Activated CD4-positive, alpha-beta T cell treated with anti-CD3 and anti-CD28 coated beads for 36 hours (primary cell): ENCODE measurements at regions of chr6 and their contacts with region 1.

Region 1: GRCh38 chr6:27452496-27452897 is 20.4 kb downstream of the ZNF184 start:
- DNase-seq: no peak
- ATAC-seq: no peak
- H3K4me3 Mint-ChIP-seq: no peak overlapping the region
- H3K27ac Mint-ChIP-seq: no peak overlapping the region
- H3K4me1 Mint-ChIP-seq: no peaks in the 10 kb centered on the region
- H3K27me3 Mint-ChIP-seq: no peaks in the 10 kb centered on the region

Region 2: DNA sequence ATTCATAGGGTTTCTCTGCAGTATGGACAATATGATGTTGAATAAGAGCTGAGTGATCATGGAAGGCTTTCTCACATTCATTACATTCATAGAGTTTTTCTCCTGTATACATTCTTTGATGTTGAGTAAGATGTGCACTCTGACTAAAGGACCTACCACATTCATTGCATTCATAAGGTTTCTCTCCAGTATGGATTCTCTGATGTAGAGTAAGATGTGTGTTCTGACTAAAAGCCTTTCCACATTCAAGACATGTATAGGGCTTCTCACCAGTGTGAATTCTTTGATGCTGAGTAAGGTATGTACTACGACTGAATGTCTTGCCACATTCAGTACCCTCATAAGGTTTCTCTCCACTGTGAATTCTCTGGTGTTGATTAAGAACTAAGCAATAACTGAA is 93.3 kb before region 1 on chr6:
- CTCF ChIA-PET with region 1: no interaction called
- POLR2A ChIA-PET with region 1: no interaction called
- intact Hi-C with region 1: loop called in 1 of 2 experiments (anchors 5 kb)
- DNase-seq: no peak
- ATAC-seq: no peak
- H3K4me3 Mint-ChIP-seq: no peak overlapping the region
- H3K27ac Mint-ChIP-seq: no peak overlapping the region
- H3K4me1 Mint-ChIP-seq: no peaks in the 10 kb centered on the region
- H3K27me3 Mint-ChIP-seq: no peaks in the 10 kb centered on the region